ENCODE measurements at regions of chr4 and their contacts with region 1.

Region 1: DNA sequence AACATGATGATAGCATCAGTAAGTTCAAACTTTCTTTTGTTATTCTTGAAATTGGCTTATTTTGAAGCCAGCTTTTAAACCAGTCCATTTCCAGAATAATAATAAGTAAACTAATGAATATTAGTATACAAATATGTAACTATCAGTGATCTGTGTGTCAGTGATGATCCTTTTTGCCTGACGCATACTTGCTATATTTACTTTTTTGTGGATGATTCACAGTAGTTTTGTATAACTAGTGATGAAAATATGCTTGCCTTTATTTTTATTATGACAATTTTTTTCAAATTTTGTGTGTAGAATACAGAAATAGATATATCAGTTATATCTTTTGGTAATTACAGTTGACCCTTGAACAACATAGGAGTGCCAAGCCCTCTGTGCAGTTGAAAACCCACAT is 49.5 kb downstream of the USP53 start:
- DNase-seq: no peak
- ATAC-seq: no peak
- H3K4me3 ChIP-seq: no peak overlapping the region
- H3K27ac ChIP-seq: no peak overlapping the region
- H3K4me1 ChIP-seq: no peaks in the 10 kb centered on the region
- H3K27me3 ChIP-seq: no peaks in the 10 kb centered on the region
- CTCF ChIP-seq: no peak
- POLR2A ChIP-seq: no peak

Region 2: DNA sequence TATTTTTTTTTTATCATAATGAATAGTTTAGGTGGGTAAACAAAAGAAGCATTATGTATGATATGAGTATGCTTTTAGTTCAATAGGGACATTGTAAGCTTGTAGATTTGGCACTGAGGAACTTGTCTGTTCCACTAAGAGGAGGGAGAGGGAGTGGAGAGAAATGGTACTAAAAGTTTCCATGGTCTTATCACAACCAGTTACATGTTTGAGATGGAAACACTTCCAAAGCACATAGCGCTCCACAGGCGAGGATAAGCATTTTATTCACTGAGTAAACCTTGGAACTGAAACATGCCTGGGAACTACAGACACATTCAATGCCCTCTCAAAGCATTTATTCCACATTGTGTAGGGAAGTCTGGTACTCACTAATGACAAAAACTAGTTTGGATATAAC is 110.8 kb before region 1 on chr4:
- intact Hi-C with region 1: loop called in 1 of 10 experiments (anchors 5 kb)
- DNase-seq: peak in 2 of 5 donors; percentile 27 to 34
- ATAC-seq: peak; percentile 86 to 97 (median 90)
- H3K4me3 ChIP-seq: no peak overlapping the region
- H3K27ac ChIP-seq: peak overlapping the region; percentile 32 to 88 (median 71)
- H3K4me1 ChIP-seq: peaks cover 0 to 69% (median 16%) of the 10 kb centered on the region in 12 donors
- H3K27me3 ChIP-seq: no peaks in the 10 kb centered on the region
- CTCF ChIP-seq: peak in 2 of 12 donors; percentile 18 to 25
- POLR2A ChIP-seq: peak in 1 of 2 donors; percentile 20

Region 3: DNA sequence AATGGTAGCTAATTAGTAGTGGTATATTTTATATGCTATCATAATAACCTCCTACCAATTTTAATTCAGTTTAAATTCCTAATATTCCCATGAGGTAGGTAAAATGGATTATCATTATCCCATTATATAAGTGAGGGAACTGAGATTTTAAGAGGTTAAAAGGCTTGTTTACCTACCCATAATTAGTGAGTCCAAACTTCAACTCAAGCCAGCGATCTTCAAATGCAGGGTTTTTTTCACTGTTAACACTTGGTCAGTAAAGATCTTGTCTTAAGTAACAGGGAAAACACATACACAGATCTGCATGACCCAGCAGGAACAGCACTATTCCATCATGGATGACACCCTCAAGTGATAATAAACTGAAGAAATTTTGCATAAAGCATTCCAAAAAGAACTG is 28.6 kb after region 1 on chr4:
- intact Hi-C with region 1: no loop called
- DNase-seq: no peak
- ATAC-seq: no peak
- H3K4me3 ChIP-seq: no peak overlapping the region
- H3K27ac ChIP-seq: no peak overlapping the region
- H3K4me1 ChIP-seq: peaks cover 0 to 13% (median 10%) of the 10 kb centered on the region in 12 donors
- H3K27me3 ChIP-seq: no peaks in the 10 kb centered on the region
- CTCF ChIP-seq: no peak
- POLR2A ChIP-seq: no peak

Measured in heart left ventricle (tissue), 16 donors.